A673 (cell line): ENCODE measurements at regions of chr15 and their contacts with region 1.

Region 1: DNA sequence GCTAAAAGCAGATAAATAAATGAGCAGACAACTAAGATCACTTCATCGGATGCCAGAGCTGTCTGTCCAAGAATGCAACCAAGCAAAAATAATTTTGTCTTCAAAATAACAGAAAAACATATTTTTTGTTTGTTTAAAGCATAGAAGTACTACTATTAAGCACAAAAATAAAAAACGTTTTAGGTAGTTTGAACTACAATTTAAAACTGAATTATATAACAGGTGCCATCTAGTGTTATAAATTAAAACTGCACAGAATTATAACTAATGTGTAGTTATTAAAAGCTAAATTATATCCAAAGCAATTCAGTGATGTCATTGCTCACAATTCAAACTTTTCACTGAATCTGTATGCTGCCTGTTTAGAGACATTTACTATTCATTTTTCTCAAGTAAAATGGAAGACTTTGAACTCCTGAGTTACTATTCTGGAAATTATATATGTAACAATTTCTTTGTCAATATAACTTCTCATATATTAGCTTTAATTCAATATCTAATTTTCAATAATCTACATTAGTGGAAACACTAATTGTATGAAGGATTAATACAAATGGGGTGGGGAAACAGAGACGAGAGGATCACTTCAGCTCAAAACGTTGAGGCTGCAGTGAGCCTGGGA is 29.5 kb downstream of the LINS1 start:
- DNase-seq: peak; percentile 28
- H3K4me3 ChIP-seq: no peak overlapping the region
- H3K27ac ChIP-seq: no peak overlapping the region
- H3K4me1 ChIP-seq: no peaks in the 10 kb centered on the region
- H3K27me3 ChIP-seq: no peaks in the 10 kb centered on the region
- CTCF ChIP-seq: peak; percentile 59

Region 2: DNA sequence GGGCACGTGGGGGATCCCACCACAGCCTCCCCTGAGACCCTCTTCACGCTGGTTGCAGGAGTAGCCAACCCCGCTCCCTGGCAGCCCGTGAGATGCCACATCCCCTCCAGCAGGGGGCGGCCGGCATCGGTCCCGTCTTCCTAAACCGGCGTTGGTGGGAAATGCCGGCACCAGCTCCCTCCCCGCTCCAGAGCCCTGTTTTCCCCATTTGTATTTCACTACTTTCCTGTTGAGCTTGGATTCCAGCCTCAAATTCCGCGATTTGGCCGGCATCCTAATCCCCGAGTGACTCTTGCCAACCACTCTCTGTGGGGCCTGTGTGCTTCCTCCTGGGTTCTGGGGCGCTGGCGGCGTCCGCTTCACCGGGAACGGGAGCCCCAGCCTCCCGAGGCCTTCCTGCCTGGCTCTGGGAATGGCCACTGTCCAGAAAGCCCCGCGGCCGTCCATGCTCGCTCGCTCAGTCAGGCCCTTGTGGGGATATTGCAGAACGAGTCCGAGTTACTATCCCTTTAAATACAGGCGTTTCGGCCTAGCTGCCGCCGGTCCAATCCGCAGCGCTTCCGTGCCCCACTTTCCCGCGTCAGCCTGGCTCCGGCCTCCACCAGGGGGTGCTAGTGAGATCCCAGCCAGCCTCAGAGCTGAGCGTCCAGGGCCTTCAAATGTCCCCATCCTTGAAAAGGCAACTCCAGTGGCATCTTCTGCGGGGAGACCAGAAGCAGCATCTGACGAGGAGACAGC is 222.6 kb before region 1 on chr15:
- CTCF ChIA-PET with region 1: interaction called, 11 read pairs
- POLR2A ChIA-PET with region 1: no interaction called
- intact Hi-C with region 1: loop called (anchors 5 kb)
- DNase-seq: peak; percentile 88
- H3K4me3 ChIP-seq: peak overlapping the region; percentile 50
- H3K27ac ChIP-seq: peak overlapping the region; percentile 25
- H3K4me1 ChIP-seq: no peaks in the 10 kb centered on the region
- H3K27me3 ChIP-seq: no peaks in the 10 kb centered on the region
- CTCF ChIP-seq: peak; percentile 78

Region 3: GRCh38 chr15:101086394-101087171 is 514.1 kb after region 1 on chr15:
- CTCF ChIA-PET with region 1: no interaction called
- POLR2A ChIA-PET with region 1: no interaction called
- intact Hi-C with region 1: no loop called
- DNase-seq: no peak
- H3K4me3 ChIP-seq: no peak overlapping the region
- H3K27ac ChIP-seq: no peak overlapping the region
- H3K4me1 ChIP-seq: no peaks in the 10 kb centered on the region
- H3K27me3 ChIP-seq: no peaks in the 10 kb centered on the region
- CTCF ChIP-seq: no peak